Activated naive CD4-positive, alpha-beta T cell treated with anti-CD3 and anti-CD28 coated beads for 36 hours (primary cell): ENCODE measurements at regions of chr7 and their contacts with region 1.

Region 1: GRCh38 chr7:154927624-154928143 is 75.2 kb downstream of the PAXIP1 start:
- DNase-seq: peak; percentile 91
- H3K4me3 Mint-ChIP-seq: peak overlapping the region; percentile 95
- H3K27ac Mint-ChIP-seq: peak overlapping the region; percentile 96
- H3K4me1 Mint-ChIP-seq: peaks cover 28% of the 10 kb centered on the region
- H3K27me3 Mint-ChIP-seq: no peaks in the 10 kb centered on the region

Region 2: GRCh38 chr7:154942691-154943090 is 15.0 kb after region 1 on chr7:
- CTCF ChIA-PET with region 1: interaction called, 54 read pairs
- intact Hi-C with region 1: no loop called
- DNase-seq: no peak
- H3K4me3 Mint-ChIP-seq: no peak overlapping the region
- H3K27ac Mint-ChIP-seq: no peak overlapping the region
- H3K4me1 Mint-ChIP-seq: no peaks in the 10 kb centered on the region
- H3K27me3 Mint-ChIP-seq: no peaks in the 10 kb centered on the region

Region 3: DNA sequence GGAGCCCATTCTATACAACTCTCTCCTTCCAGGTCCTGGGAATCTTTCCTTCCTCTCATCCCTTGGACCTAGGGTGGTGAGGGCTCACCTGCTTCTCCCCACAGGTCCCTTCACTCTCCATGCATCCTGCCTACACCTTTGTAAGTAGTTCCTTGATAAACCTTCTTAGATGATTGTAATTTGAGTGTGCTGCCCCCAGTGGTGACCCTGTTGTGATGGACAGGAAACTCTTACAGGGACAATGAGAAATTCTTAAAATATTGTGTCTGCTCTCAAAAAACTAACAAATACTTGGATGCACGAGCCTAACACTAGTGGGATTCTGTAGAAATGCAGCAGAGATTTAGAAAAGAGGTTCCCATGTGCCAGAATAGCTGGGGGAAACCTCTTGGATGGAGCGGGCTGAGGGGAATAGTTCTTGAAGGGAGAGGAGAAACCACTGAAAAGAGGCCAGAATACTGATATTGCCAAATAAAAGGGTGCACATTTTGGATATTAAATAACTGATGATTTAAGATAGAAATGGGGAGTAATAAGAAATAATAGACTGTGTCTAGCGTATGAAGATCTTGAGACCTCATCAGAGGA is 82.0 kb after region 1 on chr7:
- CTCF ChIA-PET with region 1: interaction called, 17 read pairs
- intact Hi-C with region 1: loop called (anchors 1 kb)
- DNase-seq: peak; percentile 30
- H3K4me3 Mint-ChIP-seq: no peak overlapping the region
- H3K27ac Mint-ChIP-seq: no peak overlapping the region
- H3K4me1 Mint-ChIP-seq: peaks cover 2% of the 10 kb centered on the region
- H3K27me3 Mint-ChIP-seq: no peaks in the 10 kb centered on the region

Region 4: DNA sequence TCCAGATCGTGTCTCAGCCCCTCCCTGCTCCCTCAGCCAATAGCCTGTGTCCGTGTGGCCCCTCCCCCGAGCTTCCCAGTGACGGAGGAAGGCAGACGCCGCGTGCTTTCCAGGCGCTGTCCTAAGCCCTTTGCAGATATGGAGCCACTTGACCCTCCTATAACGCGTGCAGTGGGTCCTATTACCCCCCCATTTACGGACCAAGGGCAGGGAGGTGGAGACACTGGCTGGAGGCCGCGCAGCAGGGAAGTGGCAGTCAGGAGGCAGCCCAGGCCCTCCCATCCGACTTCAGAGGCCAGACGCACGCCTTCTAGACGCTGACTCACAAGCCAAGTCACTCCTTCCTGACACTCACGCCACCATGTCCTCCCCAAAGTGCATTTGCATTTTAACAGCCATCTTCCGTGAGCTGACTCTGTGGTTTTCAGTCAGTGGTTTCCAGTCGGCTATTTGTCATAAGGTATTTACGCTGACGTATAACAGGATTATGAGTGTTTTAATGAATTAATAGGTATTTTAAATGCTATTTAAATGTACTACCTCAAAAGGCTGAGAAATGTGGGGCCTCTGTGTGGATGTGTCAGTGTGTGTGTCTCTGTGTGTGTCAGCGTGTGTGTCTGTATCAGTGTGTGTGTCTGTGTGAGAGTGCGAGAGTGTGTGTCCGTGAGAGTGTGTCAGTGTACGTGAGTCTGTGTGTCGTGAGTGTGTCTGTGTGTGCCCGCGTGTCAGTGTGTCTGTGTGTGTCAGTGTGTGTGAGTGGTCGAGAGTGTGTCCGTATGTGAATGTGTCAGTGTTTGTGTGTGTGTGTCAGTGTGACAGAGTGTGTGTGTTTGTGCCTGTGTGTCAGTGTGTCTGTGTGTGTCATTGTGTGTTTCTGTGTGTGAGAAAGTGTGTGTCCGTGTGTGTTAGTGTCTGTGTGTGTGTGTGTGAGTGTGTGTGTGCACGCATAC is 278.0 kb after region 1 on chr7:
- CTCF ChIA-PET with region 1: no interaction called
- intact Hi-C with region 1: loop called (anchors 1 kb)
- DNase-seq: peak; percentile 96
- H3K4me3 Mint-ChIP-seq: peak overlapping the region; percentile 69
- H3K27ac Mint-ChIP-seq: peak overlapping the region; percentile 92
- H3K4me1 Mint-ChIP-seq: peaks cover 35% of the 10 kb centered on the region
- H3K27me3 Mint-ChIP-seq: no peaks in the 10 kb centered on the region

Region 5: GRCh38 chr7:155298834-155299534 is 371.3 kb after region 1 on chr7:
- CTCF ChIA-PET with region 1: interaction called, 8 read pairs
- intact Hi-C with region 1: loop called (anchors 1 kb)
- DNase-seq: peak; percentile 98
- H3K4me3 Mint-ChIP-seq: peak overlapping the region; percentile 88
- H3K27ac Mint-ChIP-seq: peak overlapping the region; percentile 92
- H3K4me1 Mint-ChIP-seq: peaks cover 30% of the 10 kb centered on the region
- H3K27me3 Mint-ChIP-seq: no peaks in the 10 kb centered on the region

Region 6: GRCh38 chr7:155533827-155534690 is 606.4 kb after region 1 on chr7:
- CTCF ChIA-PET with region 1: no interaction called
- intact Hi-C with region 1: loop called (anchors 1 kb)
- DNase-seq: peak; percentile 49
- H3K4me3 Mint-ChIP-seq: peak overlapping the region; percentile 6
- H3K27ac Mint-ChIP-seq: no peak overlapping the region
- H3K4me1 Mint-ChIP-seq: peaks cover 17% of the 10 kb centered on the region
- H3K27me3 Mint-ChIP-seq: peaks cover 69% of the 10 kb centered on the region